Breast epithelium (tissue), 4 donors: ENCODE measurements at regions of chr14 and their contacts with region 1.

Region 1: GRCh38 chr14:32244404-32244803 is 41.3 kb upstream of the RNU6-8 start:
- DNase-seq: no peak
- H3K4me3 ChIP-seq: no peak overlapping the region
- H3K27ac ChIP-seq: no peak overlapping the region
- H3K4me1 ChIP-seq: no peaks in the 10 kb centered on the region
- H3K27me3 ChIP-seq: no peaks in the 10 kb centered on the region
- CTCF ChIP-seq: no peak
- POLR2A ChIP-seq: no peak

Region 2: DNA sequence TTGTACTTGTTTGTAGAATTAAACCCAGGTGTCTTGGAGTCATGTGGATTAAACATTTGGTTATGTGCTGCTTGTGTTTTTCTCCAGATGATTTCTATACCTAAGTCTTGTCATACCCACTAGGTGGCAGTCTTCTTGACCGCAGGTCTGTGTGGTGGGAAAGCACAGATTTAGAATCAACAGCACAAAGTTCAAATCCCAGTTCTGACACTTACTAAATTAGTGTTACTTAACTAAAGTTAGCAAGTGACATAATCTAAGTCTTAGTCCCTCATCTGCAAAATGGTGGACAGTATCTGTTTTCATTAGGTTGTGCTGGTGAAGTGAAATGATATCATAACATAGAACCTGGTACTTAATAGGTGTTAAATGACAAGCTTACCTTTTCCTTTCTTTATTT is 318.3 kb before region 1 on chr14:
- intact Hi-C with region 1: loop called (anchors 10 kb)
- DNase-seq: no peak
- H3K4me3 ChIP-seq: no peak overlapping the region
- H3K27ac ChIP-seq: peak overlapping the region; percentile 41 to 68
- H3K4me1 ChIP-seq: no peaks in the 10 kb centered on the region
- H3K27me3 ChIP-seq: no peaks in the 10 kb centered on the region
- CTCF ChIP-seq: peak in 2 of 3 donors; percentile 25 to 34
- POLR2A ChIP-seq: no peak